ENCODE measurements at regions of chr3 and their contacts with region 1.

Region 1: GRCh38 chr3:52339612-52340011 is 23.5 kb downstream of the DNAH1 start:
- DNase-seq: peak in 2 of 4 donors; percentile 67 to 80
- ATAC-seq: peak; percentile 89
- H3K4me3 ChIP-seq: no peak overlapping the region
- H3K27ac ChIP-seq: no peak overlapping the region
- H3K4me1 ChIP-seq: peaks cover 0 to 13% of the 10 kb centered on the region in 2 donors
- H3K27me3 ChIP-seq: no peaks in the 10 kb centered on the region
- CTCF ChIP-seq: peak; percentile 39 to 48

Region 2: GRCh38 chr3:52220380-52221026 is 119.1 kb before region 1 on chr3:
- intact Hi-C with region 1: loop called in 1 of 2 experiments (anchors 10 kb)
- DNase-seq: peak in 3 of 4 donors; percentile 80 to 95 (median 80)
- ATAC-seq: peak; percentile 75
- H3K4me3 ChIP-seq: no peak overlapping the region
- H3K27ac ChIP-seq: no peak overlapping the region
- H3K4me1 ChIP-seq: peaks cover 20 to 70% of the 10 kb centered on the region in 2 donors
- H3K27me3 ChIP-seq: no peaks in the 10 kb centered on the region
- CTCF ChIP-seq: peak; percentile 86 to 96

Region 3: DNA sequence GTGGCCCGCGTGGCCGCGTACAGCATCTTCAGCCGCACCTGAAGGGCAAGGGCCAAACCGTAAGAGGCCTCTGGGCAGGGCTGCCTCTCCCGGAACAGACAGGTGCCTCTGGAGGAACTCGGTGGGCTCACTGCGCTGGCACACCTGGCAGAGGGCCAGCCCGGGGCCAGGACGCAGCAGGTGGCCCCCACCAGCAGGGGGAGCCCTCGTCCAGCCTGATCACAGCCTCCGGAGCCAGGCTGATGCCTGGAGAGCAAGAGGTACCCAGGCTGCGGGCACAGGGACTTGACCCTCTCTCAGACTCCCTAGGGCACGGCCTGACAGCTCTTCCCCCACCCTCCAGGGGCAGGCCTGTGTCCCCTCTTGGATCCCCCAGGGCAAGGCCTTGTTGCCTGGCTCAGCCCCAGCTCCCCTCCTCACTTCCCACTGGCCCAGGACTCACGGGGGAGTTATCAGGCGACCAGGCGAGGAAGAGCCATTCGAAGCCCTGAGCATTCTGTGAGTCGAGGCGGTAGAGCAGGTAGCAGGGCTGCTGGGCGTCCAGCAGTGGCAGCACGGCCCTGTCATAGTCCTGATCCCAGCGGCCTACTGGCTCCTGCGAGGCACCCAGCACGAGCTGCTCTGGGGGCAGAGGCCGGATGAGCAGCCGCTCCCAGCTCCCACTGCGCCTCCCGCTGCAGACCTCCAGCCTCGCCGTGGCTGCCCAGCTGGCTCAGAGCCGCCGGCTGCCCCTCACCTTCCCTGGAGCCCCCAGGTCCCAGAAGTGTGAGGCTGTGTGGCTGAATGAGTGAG is 107.9 kb before region 1 on chr3:
- intact Hi-C with region 1: loop called (anchors 5 to 10 kb)
- DNase-seq: peak in 2 of 4 donors; percentile 80 to 95
- ATAC-seq: peak; percentile 83
- H3K4me3 ChIP-seq: no peak overlapping the region
- H3K27ac ChIP-seq: no peak overlapping the region
- H3K4me1 ChIP-seq: peaks cover 3 to 45% of the 10 kb centered on the region in 2 donors
- H3K27me3 ChIP-seq: no peaks in the 10 kb centered on the region
- CTCF ChIP-seq: peak; percentile 81 to 96

Region 4: GRCh38 chr3:52291508-52292181 is 48.0 kb before region 1 on chr3:
- intact Hi-C with region 1: loop called in 1 of 2 experiments (anchors 5 kb)
- DNase-seq: peak in 2 of 4 donors; percentile 33 to 51
- ATAC-seq: no peak
- H3K4me3 ChIP-seq: no peak overlapping the region
- H3K27ac ChIP-seq: no peak overlapping the region
- H3K4me1 ChIP-seq: peaks cover 6 to 17% of the 10 kb centered on the region in 2 donors
- H3K27me3 ChIP-seq: no peaks in the 10 kb centered on the region
- CTCF ChIP-seq: peak; percentile 24 to 33